K562 (cell line): ENCODE measurements at regions of chr5 and their contacts with region 1.

Region 1: GRCh38 chr5:177529247-177530203 is 12.8 kb upstream of the DDX41 start:
- DNase-seq: peak; percentile 43 to 87 (median 64)
- ATAC-seq: peak; percentile 87
- H3K4me3 ChIP-seq: no peak overlapping the region
- H3K27ac ChIP-seq: peak overlapping the region; percentile 9; the same call in 2 of the 3 replicates
- H3K4me1 ChIP-seq: peaks cover 24 to 30% of the 10 kb centered on the region in 2 experiments
- H3K27me3 ChIP-seq: no peaks in the 10 kb centered on the region
- CTCF ChIP-seq: no peak
- EP300 ChIP-seq: peak; percentile 66; the same call in 1 of the 2 replicates
- POLR2A ChIP-seq: no peak
- RAD21 ChIP-seq: no peak

Region 2: GRCh38 chr5:177516604-177517568 is 12.6 kb before region 1 on chr5 and contains the start of gene DDX41:
- CTCF ChIA-PET with region 1: no interaction called
- POLR2A ChIA-PET with region 1: interaction called, 12 read pairs
- in situ Hi-C with region 1: no loop called
- intact Hi-C with region 1: no loop called
- DNase-seq: peak; percentile 93 to 99 (median 96)
- ATAC-seq: peak; percentile 92
- H3K4me3 ChIP-seq: peak within 1 kb of the TSS; percentile 77
- H3K27ac ChIP-seq: peak within 1 kb of the TSS; percentile 79
- H3K4me1 ChIP-seq: peaks cover 9 to 42% of the 10 kb centered on the region in 2 experiments; a peak in 4 of 5 replicates
- H3K27me3 ChIP-seq: no peaks in the 10 kb centered on the region
- CTCF ChIP-seq: no peak
- EP300 ChIP-seq: peak; percentile 67
- POLR2A ChIP-seq: peak; percentile 94
- RAD21 ChIP-seq: peak in 1 of 2 experiments; percentile 1; a peak in 1 of 4 replicates
- polyA plus RNA-seq, gene DDX41: 38.2 to 60.1 TPM